ENCODE measurements at regions of chr11 and their contacts with region 1.

Region 1: DNA sequence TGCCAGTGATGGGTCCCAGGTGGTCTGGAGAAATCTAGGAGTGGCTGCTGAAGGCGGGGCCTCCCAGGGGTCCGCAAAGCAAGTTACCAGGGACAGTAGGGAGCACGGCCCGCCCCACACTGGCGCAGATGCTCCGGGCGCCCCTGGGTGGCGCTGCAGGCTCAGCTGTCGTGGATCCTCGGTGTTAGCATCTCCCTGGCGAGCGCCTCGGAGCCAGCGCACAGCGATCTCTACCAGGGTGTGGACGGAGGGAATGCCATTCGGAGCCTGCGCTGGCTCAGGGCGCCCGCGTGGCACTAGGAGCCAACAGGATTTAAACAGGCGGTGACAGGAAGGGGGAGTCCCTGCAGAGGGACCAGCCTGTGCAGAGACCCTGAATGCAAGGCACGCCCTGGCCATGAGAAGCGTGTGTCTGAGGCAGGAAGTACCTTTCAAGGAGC is 20.2 kb downstream of the FADS3 start:
- DNase-seq: peak; percentile 64
- ATAC-seq: peak; percentile 88
- H3K4me3 ChIP-seq: peak overlapping the region in 2 of 3 experiments; percentile 4 to 44; a peak in 2 of 6 replicates
- H3K27ac ChIP-seq: no peak overlapping the region
- H3K4me1 ChIP-seq: peaks cover 26% of the 10 kb centered on the region
- H3K27me3 ChIP-seq: 0 out of 5 replicates have a peak, but pooled peaks cover 0 to 6% of the 10 kb centered on the region in 2 experiments
- CTCF ChIP-seq: peak; percentile 98
- EP300 ChIP-seq: no peak
- POLR2A ChIP-seq: no peak
- RAD21 ChIP-seq: peak; percentile 96

Region 2: GRCh38 chr11:62061351-62062222 is 190.4 kb after region 1 on chr11:
- CTCF ChIA-PET with region 1: interaction called, 3 read pairs
- POLR2A ChIA-PET with region 1: no interaction called
- in situ Hi-C with region 1: loop called (anchors 5 kb)
- intact Hi-C with region 1: no loop called
- DNase-seq: peak; percentile 38
- ATAC-seq: no peak
- H3K4me3 ChIP-seq: no peak overlapping the region
- H3K27ac ChIP-seq: no peak overlapping the region
- H3K4me1 ChIP-seq: no peaks in the 10 kb centered on the region
- H3K27me3 ChIP-seq: peaks cover 0 to 3% of the 10 kb centered on the region in 2 experiments; a peak in 1 of 5 replicates
- CTCF ChIP-seq: peak; percentile 50
- EP300 ChIP-seq: no peak
- POLR2A ChIP-seq: no peak
- RAD21 ChIP-seq: peak; percentile 47; the same call in 1 of the 2 replicates

Region 3: DNA sequence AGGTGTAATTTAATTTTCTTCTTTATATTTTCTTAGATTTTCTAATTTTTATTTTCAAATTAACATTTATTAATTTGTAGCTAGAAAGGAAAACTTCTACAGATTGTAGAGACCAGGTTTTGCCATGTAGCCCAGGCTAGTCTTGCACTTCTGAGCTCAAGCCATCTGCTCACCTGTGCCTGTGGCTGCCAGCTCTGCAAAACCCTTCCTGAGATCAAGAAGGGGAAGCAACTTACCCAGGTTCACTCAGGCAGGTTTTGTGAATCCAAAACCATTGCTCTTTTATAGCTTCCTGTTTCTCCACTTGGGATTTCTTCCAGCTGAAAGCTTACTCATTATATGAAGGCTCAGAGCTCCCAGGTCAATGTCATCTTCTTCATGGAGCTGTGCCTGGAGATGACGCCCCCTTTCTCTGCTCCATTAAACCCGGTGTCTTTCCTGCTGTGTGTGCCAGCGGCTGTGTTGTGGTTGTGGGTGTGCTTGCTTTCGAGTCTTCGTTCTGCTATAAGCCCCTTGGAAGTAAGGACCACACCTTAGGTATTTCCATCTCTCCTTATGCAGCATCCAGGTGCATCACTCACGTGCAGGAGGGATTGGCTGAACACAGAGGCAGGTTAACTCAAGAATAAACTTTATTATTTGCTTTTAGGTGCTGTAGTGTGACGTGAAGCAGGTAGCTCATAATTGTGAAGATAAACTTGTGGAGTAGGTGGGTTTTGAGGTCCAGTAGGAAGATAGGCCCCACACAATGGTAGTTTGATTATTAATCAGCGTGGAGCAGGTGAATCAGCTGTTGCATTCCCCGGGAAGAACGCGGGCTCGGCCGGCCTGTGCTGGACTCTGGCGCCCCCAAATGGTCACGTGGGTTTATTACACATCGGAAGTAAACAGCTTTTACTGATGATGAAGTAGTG is 210.5 kb after region 1 on chr11:
- CTCF ChIA-PET with region 1: interaction called, 4 read pairs
- POLR2A ChIA-PET with region 1: no interaction called
- in situ Hi-C with region 1: no loop called
- intact Hi-C with region 1: loop called (anchors 2 kb)
- DNase-seq: peak; percentile 46
- ATAC-seq: peak; percentile 71
- H3K4me3 ChIP-seq: no peak overlapping the region; a peak in 1 of 6 replicates
- H3K27ac ChIP-seq: no peak overlapping the region
- H3K4me1 ChIP-seq: peaks cover 6% of the 10 kb centered on the region; the same call in 1 of the 2 replicates
- H3K27me3 ChIP-seq: no peaks in the 10 kb centered on the region
- CTCF ChIP-seq: peak; percentile 92
- EP300 ChIP-seq: no peak
- POLR2A ChIP-seq: no peak
- RAD21 ChIP-seq: peak; percentile 89

Measured in HepG2 (cell line).